Psoas muscle (tissue), 8 donors: ENCODE measurements at regions of chr9 and their contacts with region 1.

Region 1: DNA sequence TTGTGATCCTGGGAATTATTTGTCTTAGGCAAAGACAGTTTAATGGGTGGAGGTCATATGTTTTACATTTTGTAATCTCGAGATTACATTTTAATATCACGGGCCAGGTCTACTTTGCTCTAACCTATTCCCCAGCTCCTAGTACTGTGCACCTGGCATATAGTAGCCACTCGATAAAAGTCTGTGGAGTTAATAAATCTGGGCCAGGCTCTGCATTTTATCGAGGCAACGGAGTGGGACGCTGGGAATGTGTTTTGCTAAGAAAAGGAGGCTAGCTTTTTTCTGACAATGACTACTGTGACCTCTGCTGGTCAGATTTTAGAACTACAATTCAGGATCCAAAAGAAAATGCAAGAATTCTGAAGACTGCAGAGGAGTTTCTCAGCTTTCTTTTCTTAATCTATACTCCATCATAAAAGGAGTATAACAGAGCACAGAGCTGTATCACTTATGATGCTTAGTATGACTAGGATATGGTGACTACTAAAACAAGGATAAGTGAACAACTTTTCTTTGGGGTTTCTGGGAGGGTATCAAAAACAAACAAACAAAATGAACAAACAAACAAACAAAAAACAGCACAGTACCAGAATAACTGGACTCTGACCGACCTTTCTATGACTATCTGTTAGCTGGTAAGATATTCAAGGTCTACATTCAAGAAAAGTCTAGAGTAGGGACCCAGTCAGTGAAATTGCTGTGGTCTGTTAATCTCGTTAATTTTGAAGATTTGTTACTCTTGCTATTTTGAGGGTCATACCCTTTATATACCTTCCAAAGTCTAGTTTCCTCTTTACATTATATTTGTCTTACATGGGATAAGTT is 46.1 kb upstream of the CER1 start:
- DNase-seq: no peak
- ATAC-seq: peak; percentile 60 to 81 (median 68)
- H3K4me3 ChIP-seq: peak overlapping the region; percentile 42
- H3K27ac ChIP-seq: no peak overlapping the region
- H3K4me1 ChIP-seq: peaks cover 5% of the 10 kb centered on the region
- H3K27me3 ChIP-seq: no peaks in the 10 kb centered on the region
- CTCF ChIP-seq: peak; percentile 83

Region 2: DNA sequence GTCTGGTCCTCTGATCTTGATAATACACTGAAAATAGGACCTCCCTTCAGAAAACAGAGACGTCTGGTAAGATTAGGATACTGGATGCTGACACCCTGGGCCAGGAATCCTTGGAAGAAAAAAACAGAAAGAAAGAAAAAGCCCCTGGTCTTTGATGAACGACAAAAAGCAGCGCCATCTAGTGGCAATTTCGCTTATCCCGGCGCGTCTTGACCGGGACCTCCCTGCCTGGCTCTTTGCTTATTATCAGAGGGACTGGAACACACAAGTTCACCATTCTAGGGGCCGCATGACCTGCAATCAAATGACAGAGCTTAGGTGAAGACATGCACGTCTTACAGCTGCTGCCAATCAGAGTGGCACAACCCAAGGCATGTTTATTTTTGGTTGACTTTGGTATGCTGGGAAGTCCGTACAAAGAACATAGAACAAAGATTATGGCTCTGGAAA is 339.8 kb before region 1 on chr9:
- intact Hi-C with region 1: loop called in 1 of 2 experiments (anchors 10 kb)
- DNase-seq: peak; percentile 67 to 73
- ATAC-seq: peak; percentile 58 to 84 (median 67)
- H3K4me3 ChIP-seq: no peak overlapping the region
- H3K27ac ChIP-seq: no peak overlapping the region
- H3K4me1 ChIP-seq: peaks cover 16% of the 10 kb centered on the region
- H3K27me3 ChIP-seq: no peaks in the 10 kb centered on the region
- CTCF ChIP-seq: peak; percentile 77

Region 3: DNA sequence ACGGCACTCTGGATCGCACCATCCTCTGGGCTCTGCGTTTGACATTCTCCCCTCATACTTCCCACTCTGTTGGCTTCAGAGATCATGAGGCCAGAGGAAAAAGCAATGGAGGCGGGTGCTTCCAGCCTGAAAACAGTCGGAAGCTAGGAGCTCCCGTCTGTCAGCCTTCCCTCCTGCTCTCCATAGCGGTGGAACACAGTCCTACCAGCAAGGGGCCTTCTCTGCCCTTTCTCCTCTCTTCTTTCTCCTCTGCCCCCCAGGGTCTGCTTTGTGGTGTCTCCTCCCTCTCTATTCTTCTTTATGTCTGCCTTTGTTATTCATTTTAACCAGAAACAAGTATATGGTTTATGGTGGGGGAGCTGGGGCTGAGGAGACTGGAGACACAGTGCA is 302.2 kb before region 1 on chr9:
- intact Hi-C with region 1: loop called (anchors 10 kb)
- DNase-seq: no peak
- ATAC-seq: no peak
- H3K4me3 ChIP-seq: no peak overlapping the region
- H3K27ac ChIP-seq: no peak overlapping the region
- H3K4me1 ChIP-seq: no peaks in the 10 kb centered on the region
- H3K27me3 ChIP-seq: no peaks in the 10 kb centered on the region
- CTCF ChIP-seq: no peak

Region 4: GRCh38 chr9:14616188-14616982 is 152.2 kb before region 1 on chr9:
- intact Hi-C with region 1: loop called (anchors 2 to 5 kb)
- DNase-seq: no peak
- ATAC-seq: peak in 3 of 4 donors; percentile 42 to 72 (median 50)
- H3K4me3 ChIP-seq: no peak overlapping the region
- H3K27ac ChIP-seq: no peak overlapping the region
- H3K4me1 ChIP-seq: no peaks in the 10 kb centered on the region
- H3K27me3 ChIP-seq: no peaks in the 10 kb centered on the region
- CTCF ChIP-seq: peak; percentile 67

Region 5: GRCh38 chr9:14693206-14693861 is 75.3 kb before region 1 on chr9 and contains the start of gene ZDHHC21:
- intact Hi-C with region 1: loop called in 1 of 2 experiments (anchors 2 kb)
- DNase-seq: peak; percentile 77 to 88
- ATAC-seq: peak; percentile 92 to 98 (median 96)
- H3K4me3 ChIP-seq: peak within 1 kb of the TSS; percentile 90
- H3K27ac ChIP-seq: peak within 1 kb of the TSS; percentile 77
- H3K4me1 ChIP-seq: peaks cover 9% of the 10 kb centered on the region
- H3K27me3 ChIP-seq: no peaks in the 10 kb centered on the region
- CTCF ChIP-seq: no peak
- total RNA-seq, gene ZDHHC21: 4.7 to 9.9 (median 6.7) TPM

Region 6: DNA sequence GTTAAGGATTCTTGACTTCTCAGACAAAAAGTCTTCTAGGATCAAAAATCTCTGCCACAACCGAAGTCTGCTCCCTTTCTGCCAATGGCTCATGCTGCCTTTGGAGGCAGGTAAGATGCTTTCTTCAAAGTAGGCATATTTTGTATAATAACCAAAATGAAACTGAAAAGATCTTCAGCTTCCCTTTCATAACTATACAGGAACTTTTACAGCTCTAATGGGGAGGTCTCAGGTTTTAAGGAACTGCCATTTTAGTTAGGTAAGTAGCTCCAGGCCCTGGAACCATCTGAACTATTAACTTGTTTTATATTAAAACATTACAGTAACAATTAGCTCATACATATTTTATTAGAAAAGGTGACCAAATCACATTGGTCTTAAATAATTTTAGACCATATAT is 252.5 kb after region 1 on chr9:
- intact Hi-C with region 1: no loop called
- DNase-seq: no peak
- ATAC-seq: no peak
- H3K4me3 ChIP-seq: no peak overlapping the region
- H3K27ac ChIP-seq: no peak overlapping the region
- H3K4me1 ChIP-seq: no peaks in the 10 kb centered on the region
- H3K27me3 ChIP-seq: no peaks in the 10 kb centered on the region
- CTCF ChIP-seq: no peak

Region 7: GRCh38 chr9:15461601-15462000 is 693.0 kb after region 1 on chr9:
- intact Hi-C with region 1: no loop called
- DNase-seq: no peak
- ATAC-seq: no peak
- H3K4me3 ChIP-seq: no peak overlapping the region
- H3K27ac ChIP-seq: no peak overlapping the region
- H3K4me1 ChIP-seq: no peaks in the 10 kb centered on the region
- H3K27me3 ChIP-seq: no peaks in the 10 kb centered on the region
- CTCF ChIP-seq: no peak